PC-3 (cell line): ENCODE measurements at regions of chr17 and their contacts with region 1.

Region 1: DNA sequence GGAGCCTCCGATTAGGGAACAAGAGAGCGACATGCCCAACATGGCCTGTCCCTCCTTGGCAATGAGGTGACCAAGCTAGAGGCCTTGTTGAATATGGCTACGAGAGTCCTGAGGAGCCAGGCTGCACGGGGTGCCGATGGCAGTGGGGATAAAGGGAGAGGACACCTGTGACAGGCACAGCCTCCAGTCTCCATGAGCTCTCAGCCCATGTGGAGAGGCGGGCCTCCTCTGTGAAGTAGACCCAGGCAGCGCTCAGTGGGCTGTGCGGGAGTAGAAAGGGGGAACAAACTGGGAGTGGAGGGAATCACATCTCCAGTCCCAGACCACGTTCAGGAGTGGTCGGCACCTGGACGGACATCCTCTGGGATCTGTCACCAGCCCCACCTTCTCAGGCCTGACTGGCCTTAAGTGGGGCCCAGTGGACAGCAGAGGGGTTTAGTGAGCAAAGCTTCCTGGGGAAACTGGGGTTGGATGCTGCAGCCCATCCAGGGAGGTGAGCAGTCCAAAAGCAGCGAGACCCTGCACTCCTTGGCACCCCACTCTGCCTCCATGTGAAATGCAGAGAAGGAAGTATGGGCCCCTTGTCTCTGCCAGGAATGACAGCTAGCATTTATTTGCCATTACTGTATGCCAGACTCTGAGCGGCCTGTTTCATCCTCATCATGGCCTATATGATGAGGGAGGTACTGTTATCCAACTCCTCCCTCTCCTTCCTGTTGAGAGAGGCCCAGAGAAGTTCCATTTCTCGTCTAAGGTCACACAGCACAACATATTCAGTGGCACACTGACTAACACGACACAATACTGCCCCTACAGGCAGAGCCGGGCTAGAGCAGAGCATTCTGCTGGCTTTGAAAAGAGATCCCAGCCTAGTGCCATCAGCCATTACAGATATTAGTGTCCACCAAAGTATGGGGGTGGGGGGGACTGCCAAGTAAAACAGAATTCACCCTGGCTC is 4.5 kb upstream of the TMEM92 start:
- DNase-seq: peak; percentile 88
- ATAC-seq: peak; percentile 39
- H3K4me3 ChIP-seq: no peak overlapping the region
- H3K27ac ChIP-seq: no peak overlapping the region
- H3K4me1 ChIP-seq: peaks cover 34% of the 10 kb centered on the region
- H3K27me3 ChIP-seq: no peaks in the 10 kb centered on the region
- CTCF ChIP-seq: peak; percentile 96

Region 2: DNA sequence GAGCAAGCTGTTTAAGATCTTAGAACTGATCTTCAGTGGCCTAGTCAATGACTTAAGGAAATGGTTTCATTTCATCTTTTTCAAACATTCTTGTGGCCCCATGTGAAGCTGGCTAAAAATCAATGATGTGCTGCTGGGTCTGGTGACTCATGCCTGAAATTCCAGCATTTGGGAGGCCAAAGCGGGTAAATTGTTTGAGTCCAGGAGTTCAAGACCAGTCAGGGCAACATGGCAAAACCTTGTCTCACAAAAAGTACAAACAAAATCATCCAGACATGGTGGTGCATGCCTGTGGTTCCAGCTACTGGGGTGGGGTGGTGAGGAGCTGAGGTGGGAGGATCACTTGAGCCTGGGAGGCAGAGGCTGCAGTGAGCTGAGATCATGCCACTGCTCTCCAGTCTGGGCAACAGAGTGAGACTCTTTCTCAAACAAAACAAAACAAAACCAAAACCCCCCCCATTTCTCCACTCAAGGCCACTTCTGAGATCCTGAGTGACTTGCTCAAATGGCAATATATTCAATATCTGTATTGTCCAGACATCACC is 50.9 kb before region 1 on chr17:
- CTCF ChIA-PET with region 1: no interaction called
- POLR2A ChIA-PET with region 1: no interaction called
- intact Hi-C with region 1: loop called (anchors 5 kb)
- DNase-seq: peak; percentile 82
- ATAC-seq: peak; percentile 28
- H3K4me3 ChIP-seq: peak overlapping the region; percentile 13; the same call in 1 of the 2 replicates
- H3K27ac ChIP-seq: peak overlapping the region; percentile 89
- H3K4me1 ChIP-seq: peaks cover 44% of the 10 kb centered on the region
- H3K27me3 ChIP-seq: no peaks in the 10 kb centered on the region
- CTCF ChIP-seq: no peak

Region 3: DNA sequence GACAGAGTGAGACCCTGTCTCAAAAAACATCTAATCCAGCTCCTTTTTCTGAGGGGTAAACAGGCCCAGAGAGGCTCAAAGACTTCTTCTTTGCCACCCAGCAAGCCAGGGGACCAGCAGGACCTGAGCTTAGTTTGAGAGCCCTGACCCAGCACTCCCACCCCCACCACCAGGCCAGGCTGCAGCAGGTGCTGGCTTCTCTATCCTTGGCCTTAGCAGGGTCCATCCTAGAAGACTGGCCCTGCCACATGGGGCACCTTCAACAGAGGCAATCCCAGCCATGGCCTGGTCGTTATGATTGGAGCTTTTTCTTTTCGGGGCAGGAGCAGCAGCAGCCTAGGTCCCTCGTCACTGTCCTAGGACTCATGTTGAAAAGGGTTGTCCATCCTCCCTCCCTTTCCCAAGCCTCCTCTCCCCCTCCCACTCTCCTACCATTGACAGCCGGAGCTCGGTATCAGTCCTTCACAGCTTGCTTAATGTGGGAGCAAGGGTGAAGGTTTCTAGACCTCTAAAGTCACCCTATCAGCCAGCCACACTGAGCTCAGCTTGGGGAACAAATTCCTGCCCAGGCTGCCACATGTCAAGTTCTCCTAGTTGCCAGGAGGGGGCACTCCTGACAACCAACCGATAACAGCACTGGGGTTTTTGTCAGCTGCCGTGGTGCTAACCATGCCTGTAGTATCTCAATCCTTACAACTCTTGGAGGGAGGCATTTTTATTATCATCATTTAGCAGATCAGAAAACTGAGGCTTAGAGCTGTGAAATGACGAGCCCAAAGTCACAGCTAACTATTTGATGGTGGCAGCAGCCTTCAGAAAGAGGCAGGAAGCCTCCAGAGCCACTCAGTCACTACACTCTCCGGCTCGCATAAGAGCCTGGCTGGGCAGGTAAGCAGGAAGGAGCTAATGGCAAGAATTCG is 92.1 kb after region 1 on chr17:
- CTCF ChIA-PET with region 1: no interaction called
- POLR2A ChIA-PET with region 1: no interaction called
- intact Hi-C with region 1: no loop called
- DNase-seq: peak; percentile 79
- ATAC-seq: peak; percentile 75
- H3K4me3 ChIP-seq: no peak overlapping the region
- H3K27ac ChIP-seq: no peak overlapping the region
- H3K4me1 ChIP-seq: no peaks in the 10 kb centered on the region
- H3K27me3 ChIP-seq: no peaks in the 10 kb centered on the region
- CTCF ChIP-seq: peak; percentile 92

Region 4: DNA sequence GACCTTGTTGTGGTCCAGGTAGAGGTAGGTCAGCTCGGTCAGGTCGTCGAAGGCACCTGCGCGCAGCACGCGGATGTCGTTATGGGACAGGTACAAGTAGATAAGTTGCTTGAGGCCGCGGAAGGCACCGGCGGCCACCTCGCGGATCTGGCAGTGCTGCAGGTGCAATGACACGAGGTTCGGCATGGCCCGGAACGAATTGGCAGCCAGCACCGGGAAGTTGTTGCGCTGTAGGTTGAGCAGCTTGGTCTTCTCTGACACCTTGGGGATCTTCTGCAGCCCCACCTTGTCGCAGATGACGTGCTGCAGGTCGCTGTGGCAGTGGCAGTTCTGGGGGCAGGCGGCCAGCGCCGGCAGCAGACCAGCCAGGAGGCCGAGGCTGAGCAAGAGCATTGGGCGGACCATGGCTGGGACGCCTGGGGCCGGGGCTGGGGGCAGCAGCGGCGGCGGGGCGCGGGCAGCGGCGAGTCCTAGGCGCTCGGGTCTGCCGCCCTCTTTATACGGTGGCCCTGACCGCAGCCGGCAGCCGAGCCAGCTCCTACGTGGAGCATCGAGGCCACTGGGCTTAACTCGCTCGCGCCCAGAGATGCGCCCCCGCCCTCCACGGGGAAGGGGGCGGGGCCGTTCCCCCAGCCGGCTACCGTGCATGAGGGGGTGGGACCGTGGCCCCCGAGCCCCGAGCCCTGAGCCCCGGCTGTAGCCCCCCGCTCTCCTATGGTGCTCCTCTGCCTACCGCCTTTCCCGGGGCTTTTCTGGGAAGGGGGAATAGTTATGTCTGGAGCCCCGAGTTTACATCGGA is 198.9 kb after region 1 on chr17 and contains the start of gene CHAD:
- CTCF ChIA-PET with region 1: no interaction called
- POLR2A ChIA-PET with region 1: no interaction called
- intact Hi-C with region 1: no loop called
- DNase-seq: no peak
- ATAC-seq: no peak
- H3K4me3 ChIP-seq: no peak within 1 kb of the TSS
- H3K27ac ChIP-seq: no peak within 1 kb of the TSS
- H3K4me1 ChIP-seq: peaks cover 10% of the 10 kb centered on the region; the same call in 1 of the 2 replicates
- H3K27me3 ChIP-seq: no peaks in the 10 kb centered on the region
- CTCF ChIP-seq: no peak
- total RNA-seq, gene CHAD: not detected in 2 replicates